Activated naive CD4-positive, alpha-beta T cell treated with anti-CD3 and anti-CD28 coated beads for 36 hours (primary cell): ENCODE measurements at regions of chr19 and their contacts with region 1.

Region 1: GRCh38 chr19:34556488-34556887 is 74.9 kb downstream of the WTIP start:
- DNase-seq: peak; percentile 65
- H3K4me3 Mint-ChIP-seq: no peak overlapping the region
- H3K27ac Mint-ChIP-seq: no peak overlapping the region
- H3K4me1 Mint-ChIP-seq: no peaks in the 10 kb centered on the region
- H3K27me3 Mint-ChIP-seq: peaks cover 28% of the 10 kb centered on the region

Region 2: DNA sequence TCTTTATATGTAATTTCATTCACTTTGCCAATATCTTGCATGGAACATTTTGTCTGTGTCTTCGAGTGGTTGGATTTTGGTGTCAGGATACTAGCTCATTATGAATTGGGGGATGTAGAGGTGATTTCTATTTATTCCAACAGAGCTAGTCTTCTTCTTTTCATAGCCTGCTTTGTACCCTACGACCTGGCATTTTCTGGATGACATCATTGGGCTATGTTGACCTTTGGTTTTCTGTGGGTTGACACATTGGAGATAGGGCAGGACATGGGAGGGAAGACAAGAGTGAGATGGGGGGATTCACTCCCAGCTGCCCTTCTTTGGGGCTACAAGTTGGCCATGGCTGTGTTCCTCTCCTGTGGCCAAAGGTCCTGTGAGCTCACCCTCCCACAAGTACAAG is 36.9 kb before region 1 on chr19:
- CTCF ChIA-PET with region 1: no interaction called
- intact Hi-C with region 1: no loop called
- DNase-seq: no peak
- H3K4me3 Mint-ChIP-seq: no peak overlapping the region
- H3K27ac Mint-ChIP-seq: no peak overlapping the region
- H3K4me1 Mint-ChIP-seq: no peaks in the 10 kb centered on the region
- H3K27me3 Mint-ChIP-seq: peaks cover 3% of the 10 kb centered on the region

Region 3: GRCh38 chr19:34618410-34618809 is 61.9 kb after region 1 on chr19:
- CTCF ChIA-PET with region 1: no interaction called
- intact Hi-C with region 1: no loop called
- DNase-seq: no peak
- H3K4me3 Mint-ChIP-seq: no peak overlapping the region
- H3K27ac Mint-ChIP-seq: no peak overlapping the region
- H3K4me1 Mint-ChIP-seq: no peaks in the 10 kb centered on the region
- H3K27me3 Mint-ChIP-seq: no peaks in the 10 kb centered on the region

Region 4: GRCh38 chr19:34662919-34663318 is 106.4 kb after region 1 on chr19:
- CTCF ChIA-PET with region 1: no interaction called
- intact Hi-C with region 1: loop called (anchors 2 kb)
- DNase-seq: peak; percentile 62
- H3K4me3 Mint-ChIP-seq: no peak overlapping the region
- H3K27ac Mint-ChIP-seq: no peak overlapping the region
- H3K4me1 Mint-ChIP-seq: peaks cover 22% of the 10 kb centered on the region
- H3K27me3 Mint-ChIP-seq: peaks cover under 1% of the 10 kb centered on the region

Region 5: GRCh38 chr19:34712395-34713261 is 156.1 kb after region 1 on chr19:
- CTCF ChIA-PET with region 1: interaction called, 3 read pairs
- intact Hi-C with region 1: loop called (anchors 1 kb)
- DNase-seq: peak; percentile 74
- H3K4me3 Mint-ChIP-seq: no peak overlapping the region
- H3K27ac Mint-ChIP-seq: no peak overlapping the region
- H3K4me1 Mint-ChIP-seq: no peaks in the 10 kb centered on the region
- H3K27me3 Mint-ChIP-seq: peaks cover 11% of the 10 kb centered on the region

Region 6: GRCh38 chr19:35154525-35155406 is 598.3 kb after region 1 on chr19 and contains the start of gene FXYD5:
- CTCF ChIA-PET with region 1: no interaction called
- intact Hi-C with region 1: no loop called
- DNase-seq: peak; percentile 93
- H3K4me3 Mint-ChIP-seq: peak within 1 kb of the TSS; percentile 98
- H3K27ac Mint-ChIP-seq: peak within 1 kb of the TSS; percentile 99
- H3K4me1 Mint-ChIP-seq: peaks cover 47% of the 10 kb centered on the region
- H3K27me3 Mint-ChIP-seq: no peaks in the 10 kb centered on the region
- total RNA-seq, gene FXYD5: 289 to 294 TPM